Activated naive CD4-positive, alpha-beta T cell treated with anti-CD3 and anti-CD28 coated beads for 36 hours (primary cell): ENCODE measurements at regions of chr9 and their contacts with region 1.

Region 1: DNA sequence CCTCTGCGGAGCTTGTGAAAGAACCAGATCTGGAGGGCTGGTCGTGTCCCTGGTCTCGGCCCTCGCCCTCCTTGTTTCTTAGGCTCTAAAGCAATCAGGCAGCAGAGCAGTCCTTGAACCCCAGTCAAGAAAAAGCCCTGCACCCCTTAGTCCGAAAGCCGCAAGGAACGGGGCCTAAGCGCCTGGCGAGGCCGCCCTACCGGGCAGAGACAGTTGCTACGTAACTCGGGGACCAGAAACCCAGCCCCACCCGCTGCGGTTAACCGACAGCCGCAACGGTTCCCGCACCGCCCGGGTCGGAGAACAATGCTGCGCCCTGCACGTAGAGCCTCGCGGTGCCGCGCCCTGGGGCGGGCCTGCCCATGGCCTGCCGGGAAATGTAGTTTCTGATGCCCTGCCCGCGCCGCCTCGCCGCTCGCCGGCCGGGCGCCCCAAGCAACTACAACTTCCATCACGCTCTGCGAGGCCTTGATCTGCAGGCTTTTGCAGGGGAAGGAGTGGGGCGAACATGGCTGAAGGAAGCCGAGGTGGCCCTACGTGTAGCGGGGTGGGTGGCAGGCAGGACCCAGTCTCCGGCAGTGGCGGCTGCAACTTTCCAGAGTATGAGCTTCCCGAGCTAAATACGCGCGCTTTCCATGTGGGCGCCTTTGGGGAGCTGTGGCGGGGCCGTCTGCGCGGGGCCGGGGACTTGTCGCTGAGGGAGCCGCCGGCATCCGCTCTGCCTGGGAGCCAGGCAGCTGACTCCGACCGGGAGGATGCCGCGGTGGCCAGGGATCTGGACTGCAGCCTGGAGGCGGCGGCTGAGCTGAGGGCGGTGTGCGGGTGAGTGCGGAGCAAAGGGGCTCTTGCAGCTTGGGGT is at the start of gene SNAPC3:
- DNase-seq: peak; percentile 94
- H3K4me3 Mint-ChIP-seq: peak within 1 kb of the TSS; percentile 89
- H3K27ac Mint-ChIP-seq: peak within 1 kb of the TSS; percentile 86
- H3K4me1 Mint-ChIP-seq: peaks cover 28% of the 10 kb centered on the region
- H3K27me3 Mint-ChIP-seq: no peaks in the 10 kb centered on the region
- total RNA-seq, gene SNAPC3: 30.6 to 32.8 TPM

Region 2: DNA sequence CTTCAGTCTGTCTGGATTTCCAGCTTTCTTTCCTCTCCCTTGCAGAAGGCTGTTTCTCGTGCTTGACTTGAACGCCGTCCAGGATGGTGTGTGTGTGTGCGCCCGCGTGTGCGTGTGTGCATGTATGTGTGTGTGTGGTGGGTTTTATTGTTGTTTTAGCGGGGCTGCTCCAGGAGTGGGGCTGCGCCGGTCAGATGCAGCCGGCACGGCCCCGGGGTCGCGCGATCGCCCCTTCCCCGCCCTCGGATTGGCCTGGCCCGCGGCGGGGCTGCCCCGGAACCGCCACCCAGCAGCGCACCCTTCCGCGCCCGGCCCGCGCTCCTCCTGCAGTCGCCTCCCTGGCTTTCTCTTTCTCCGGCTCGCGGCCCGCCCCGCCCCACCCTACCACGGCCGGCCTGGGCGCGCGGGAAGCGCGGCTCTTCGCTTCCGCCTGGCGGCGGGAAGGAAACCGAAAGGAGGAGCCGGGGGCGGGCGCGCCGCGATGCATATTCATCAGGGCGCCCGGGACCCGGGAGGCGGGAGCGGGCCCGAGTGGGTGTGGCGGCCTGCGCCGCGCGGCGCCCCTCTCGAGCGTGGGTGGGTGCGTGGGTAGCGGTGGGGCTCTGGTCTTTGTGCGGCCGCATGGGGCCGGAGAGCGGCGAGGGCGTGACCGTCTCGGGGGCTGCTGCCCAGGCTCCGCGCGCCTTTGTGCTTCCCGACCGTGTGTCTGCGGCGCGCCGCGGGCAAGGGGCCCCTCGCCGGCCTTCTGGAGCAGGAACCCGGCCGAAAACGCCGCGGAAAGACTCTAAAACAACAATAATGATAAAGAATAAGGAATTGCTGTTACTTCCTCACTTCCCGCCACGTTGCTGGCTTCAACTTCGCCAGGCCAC is 1100.2 kb before region 1 on chr9:
- CTCF ChIA-PET with region 1: no interaction called
- intact Hi-C with region 1: loop called (anchors 5 kb)
- DNase-seq: peak; percentile 82
- H3K4me3 Mint-ChIP-seq: peak overlapping the region; percentile 77
- H3K27ac Mint-ChIP-seq: no peak overlapping the region
- H3K4me1 Mint-ChIP-seq: peaks cover 8% of the 10 kb centered on the region
- H3K27me3 Mint-ChIP-seq: peaks cover 42% of the 10 kb centered on the region

Region 3: DNA sequence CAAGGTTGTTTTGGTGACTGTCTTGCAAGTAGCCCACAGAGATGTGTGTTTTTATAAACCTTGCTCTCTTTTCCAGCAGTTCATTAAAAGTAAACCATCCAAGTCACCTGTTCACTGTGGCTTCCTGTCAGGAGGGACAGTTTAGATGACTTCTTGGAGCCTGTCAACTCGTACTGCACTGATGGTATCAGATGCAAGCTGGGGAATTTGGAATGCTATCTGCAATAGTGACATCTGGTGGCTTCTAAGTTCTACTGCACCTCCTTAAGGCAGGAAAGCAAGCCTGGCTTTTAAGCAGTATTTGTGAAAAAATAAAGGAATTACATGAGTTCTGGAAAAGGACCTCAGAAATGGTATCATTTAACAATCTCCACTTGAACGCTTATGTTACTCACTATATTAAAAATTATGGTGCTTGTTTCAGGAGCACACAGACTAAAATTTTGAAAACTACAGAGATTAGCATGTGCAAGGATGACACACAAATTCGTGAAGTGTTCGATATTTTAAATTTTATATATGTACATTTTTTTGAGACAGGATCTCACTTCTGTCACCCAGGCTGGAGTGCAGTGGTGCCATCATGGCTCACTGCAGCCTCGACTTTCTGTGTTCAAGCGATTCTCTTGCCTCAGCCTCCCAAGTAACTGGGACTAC is 279.6 kb before region 1 on chr9:
- CTCF ChIA-PET with region 1: no interaction called
- intact Hi-C with region 1: loop called (anchors 5 kb)
- DNase-seq: peak; percentile 39
- H3K4me3 Mint-ChIP-seq: no peak overlapping the region
- H3K27ac Mint-ChIP-seq: no peak overlapping the region
- H3K4me1 Mint-ChIP-seq: peaks cover 4% of the 10 kb centered on the region
- H3K27me3 Mint-ChIP-seq: no peaks in the 10 kb centered on the region

Region 4: DNA sequence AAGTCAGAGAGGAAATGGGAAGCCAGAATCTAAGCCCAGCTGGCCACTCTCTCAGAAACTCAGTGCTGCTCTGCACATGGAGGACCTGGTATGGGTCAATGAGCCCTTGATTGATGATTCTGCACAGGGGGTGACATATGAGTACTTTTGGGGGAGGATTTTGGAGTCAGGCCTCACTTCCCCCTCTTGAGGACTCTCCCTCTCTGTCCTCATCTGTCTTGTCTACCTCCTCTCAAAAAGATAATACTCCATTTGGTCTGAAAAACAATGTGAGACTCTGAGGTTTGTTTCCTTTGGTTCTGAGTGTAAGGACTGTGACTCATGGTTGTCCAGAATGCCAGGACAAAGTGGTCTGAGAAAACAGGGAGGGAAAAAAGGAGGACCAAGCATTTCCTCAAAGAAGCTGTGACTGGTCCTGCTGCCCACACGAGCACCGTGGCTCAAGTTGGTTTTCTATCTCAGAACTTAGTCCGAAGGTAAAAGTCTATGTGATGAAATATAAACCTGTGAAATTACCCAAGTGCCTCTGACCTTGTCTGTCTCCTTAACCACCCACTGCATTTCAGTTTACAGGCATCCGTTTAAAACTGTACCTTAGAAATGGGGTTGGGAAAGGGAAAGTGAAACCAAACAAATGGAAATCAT is 126.7 kb before region 1 on chr9:
- CTCF ChIA-PET with region 1: interaction called, 3 read pairs
- intact Hi-C with region 1: loop called (anchors 1 kb)
- DNase-seq: peak; percentile 40
- H3K4me3 Mint-ChIP-seq: peak overlapping the region; percentile 63
- H3K27ac Mint-ChIP-seq: peak overlapping the region; percentile 95
- H3K4me1 Mint-ChIP-seq: peaks cover 86% of the 10 kb centered on the region
- H3K27me3 Mint-ChIP-seq: no peaks in the 10 kb centered on the region

Region 5: DNA sequence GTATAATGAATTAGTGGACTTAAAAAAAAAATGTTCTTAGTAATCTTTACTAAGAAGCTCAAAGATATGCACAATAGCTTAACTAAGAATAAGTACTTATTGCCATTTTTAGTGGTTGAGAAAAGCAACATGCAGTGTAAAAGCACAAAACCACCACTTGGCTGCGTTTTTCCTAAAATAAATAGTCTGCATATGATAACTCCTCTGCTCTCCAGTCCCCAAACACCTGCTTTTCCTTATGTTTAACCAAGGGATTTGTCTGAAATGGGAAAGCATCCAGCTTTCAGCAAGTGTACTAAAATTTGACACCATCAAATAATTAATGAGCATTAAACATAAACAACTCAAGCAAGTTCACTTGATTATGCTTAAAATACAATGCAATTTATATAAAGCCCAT is 46.8 kb after region 1 on chr9:
- CTCF ChIA-PET with region 1: interaction called, 5 read pairs
- intact Hi-C with region 1: loop called (anchors 5 kb)
- DNase-seq: no peak
- H3K4me3 Mint-ChIP-seq: no peak overlapping the region
- H3K27ac Mint-ChIP-seq: no peak overlapping the region
- H3K4me1 Mint-ChIP-seq: peaks cover 15% of the 10 kb centered on the region
- H3K27me3 Mint-ChIP-seq: no peaks in the 10 kb centered on the region

Region 6: GRCh38 chr9:15529566-15530324 is 107.1 kb after region 1 on chr9:
- CTCF ChIA-PET with region 1: interaction called, 3 read pairs
- intact Hi-C with region 1: loop called (anchors 1 kb)
- DNase-seq: no peak
- H3K4me3 Mint-ChIP-seq: no peak overlapping the region
- H3K27ac Mint-ChIP-seq: no peak overlapping the region
- H3K4me1 Mint-ChIP-seq: peaks cover 11% of the 10 kb centered on the region
- H3K27me3 Mint-ChIP-seq: no peaks in the 10 kb centered on the region

Region 7: DNA sequence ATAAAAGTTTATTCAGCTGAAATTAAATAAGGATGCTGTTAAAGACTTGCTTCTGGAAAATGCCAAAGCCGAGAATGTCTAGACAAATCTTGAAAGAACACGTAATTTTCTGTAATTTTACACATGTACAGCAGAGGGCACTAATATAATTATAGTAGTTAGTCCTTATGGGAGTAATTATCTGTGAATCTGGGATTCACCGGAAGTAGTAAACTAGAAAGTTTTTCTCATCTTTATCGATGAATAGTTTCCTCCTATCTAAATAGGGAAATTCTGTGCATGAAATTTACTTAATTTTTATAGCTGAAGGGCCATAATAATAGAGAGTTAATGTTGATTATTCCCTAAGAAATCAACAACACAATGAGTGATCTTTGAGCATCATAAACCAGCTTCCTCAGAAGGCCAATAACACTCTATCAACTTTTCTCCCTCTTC is 1693.8 kb after region 1 on chr9:
- CTCF ChIA-PET with region 1: no interaction called
- intact Hi-C with region 1: no loop called
- DNase-seq: no peak
- H3K4me3 Mint-ChIP-seq: no peak overlapping the region
- H3K27ac Mint-ChIP-seq: no peak overlapping the region
- H3K4me1 Mint-ChIP-seq: no peaks in the 10 kb centered on the region
- H3K27me3 Mint-ChIP-seq: no peaks in the 10 kb centered on the region